ENCODE measurements at regions of chr10 and their contacts with region 1.

Region 1: DNA sequence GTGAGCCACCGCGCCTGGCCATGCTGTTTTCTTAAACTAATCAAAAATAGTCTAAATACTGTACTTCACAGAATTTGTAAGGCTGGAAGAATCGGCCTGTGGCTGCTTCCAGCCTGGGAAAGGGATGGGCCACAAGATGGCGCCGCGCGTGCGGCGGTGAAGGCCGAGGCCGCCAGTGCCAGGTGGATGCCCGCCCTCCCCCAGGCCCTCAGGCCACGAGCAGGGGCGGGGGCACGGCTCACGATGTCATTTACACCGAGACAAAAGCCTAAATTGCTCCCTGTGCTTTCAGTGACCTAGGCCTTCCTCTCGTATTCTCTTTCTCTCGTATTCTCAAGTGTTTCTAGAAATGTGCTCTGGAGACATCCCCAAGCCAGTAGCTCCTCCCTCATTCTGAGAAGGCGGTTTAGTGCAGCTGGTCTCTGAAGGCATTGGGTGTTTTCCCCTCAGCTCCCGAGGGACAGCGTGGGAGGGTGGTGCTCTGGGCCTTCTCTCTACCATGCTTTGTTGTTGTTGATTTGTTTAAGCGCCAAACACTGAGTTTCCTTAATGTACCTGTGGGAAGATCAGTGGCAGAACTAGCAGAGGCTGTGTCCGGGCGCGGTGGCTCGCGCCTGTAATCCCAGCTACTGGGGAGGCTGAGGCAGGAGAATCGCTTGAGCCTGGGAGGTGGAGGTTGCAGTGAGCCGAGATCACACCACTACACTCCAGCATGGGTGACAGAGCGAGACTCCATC is 68.4 kb downstream of the CDC123 start:
- DNase-seq: peak; percentile 84
- H3K4me3 Mint-ChIP-seq: peak overlapping the region; percentile 58
- H3K27ac Mint-ChIP-seq: peak overlapping the region; percentile 79
- H3K4me1 Mint-ChIP-seq: peaks cover 17% of the 10 kb centered on the region
- H3K27me3 Mint-ChIP-seq: no peaks in the 10 kb centered on the region

Region 2: DNA sequence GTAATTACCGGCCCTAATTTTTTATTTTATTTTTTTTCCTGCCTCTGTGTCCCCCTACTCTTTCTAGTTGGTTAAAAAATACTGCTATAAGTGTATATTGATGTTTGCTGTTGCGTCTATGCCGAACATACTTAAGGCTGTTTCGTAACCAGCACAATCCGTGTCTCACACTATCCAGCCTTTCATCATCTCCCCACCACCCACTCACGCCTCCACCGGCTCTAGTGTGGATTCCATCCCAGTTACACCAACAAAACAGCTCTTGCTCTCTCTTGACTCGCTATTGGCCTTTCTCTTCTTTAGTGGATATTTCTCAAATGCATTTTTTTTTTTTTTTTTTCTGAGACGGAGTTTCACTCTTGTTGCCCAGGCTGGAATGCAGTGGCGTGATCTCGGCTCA is 14.9 kb after region 1 on chr10:
- CTCF ChIA-PET with region 1: interaction called, 11 read pairs
- intact Hi-C with region 1: no loop called
- DNase-seq: no peak
- H3K4me3 Mint-ChIP-seq: no peak overlapping the region
- H3K27ac Mint-ChIP-seq: no peak overlapping the region
- H3K4me1 Mint-ChIP-seq: no peaks in the 10 kb centered on the region
- H3K27me3 Mint-ChIP-seq: no peaks in the 10 kb centered on the region

Region 3: DNA sequence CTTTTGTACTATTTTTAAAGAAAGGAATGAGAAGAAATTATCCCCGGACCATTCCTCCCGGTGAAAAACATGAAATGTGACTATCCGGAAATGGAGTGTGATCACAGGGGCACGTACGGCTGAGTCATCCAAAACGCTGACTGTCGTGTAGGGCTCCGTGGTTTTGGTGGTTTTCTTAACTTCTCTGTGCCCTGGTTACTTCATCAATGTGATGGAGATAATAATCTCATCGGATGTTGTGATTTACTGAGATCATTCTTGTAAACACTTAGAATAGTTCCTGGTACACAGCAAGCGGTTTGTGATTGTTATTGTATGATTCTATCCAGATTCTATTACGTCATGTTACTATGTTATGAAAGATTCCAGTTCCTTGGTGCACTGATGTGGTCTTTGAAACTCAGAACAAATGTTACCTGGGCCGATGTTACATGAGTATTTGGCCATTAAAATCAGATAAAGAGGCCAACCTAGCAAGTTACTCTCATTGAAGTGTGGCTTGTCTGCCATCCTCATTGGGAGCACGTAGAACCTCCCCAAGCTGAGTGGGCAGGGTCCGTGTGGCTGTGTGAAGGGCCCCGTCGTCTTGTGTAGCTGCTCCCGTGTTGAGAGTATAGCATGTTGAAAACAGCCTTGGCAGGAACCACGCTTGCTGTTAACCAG is 184.5 kb after region 1 on chr10:
- CTCF ChIA-PET with region 1: no interaction called
- intact Hi-C with region 1: loop called (anchors 1 kb)
- DNase-seq: peak; percentile 86
- H3K4me3 Mint-ChIP-seq: peak overlapping the region; percentile 62
- H3K27ac Mint-ChIP-seq: peak overlapping the region; percentile 52
- H3K4me1 Mint-ChIP-seq: peaks cover 40% of the 10 kb centered on the region
- H3K27me3 Mint-ChIP-seq: no peaks in the 10 kb centered on the region

Region 4: GRCh38 chr10:12656518-12657142 is 392.3 kb after region 1 on chr10:
- CTCF ChIA-PET with region 1: interaction called, 81 read pairs
- intact Hi-C with region 1: loop called (anchors 1 kb)
- DNase-seq: no peak
- H3K4me3 Mint-ChIP-seq: no peak overlapping the region
- H3K27ac Mint-ChIP-seq: no peak overlapping the region
- H3K4me1 Mint-ChIP-seq: peaks cover 2% of the 10 kb centered on the region
- H3K27me3 Mint-ChIP-seq: no peaks in the 10 kb centered on the region

Region 5: DNA sequence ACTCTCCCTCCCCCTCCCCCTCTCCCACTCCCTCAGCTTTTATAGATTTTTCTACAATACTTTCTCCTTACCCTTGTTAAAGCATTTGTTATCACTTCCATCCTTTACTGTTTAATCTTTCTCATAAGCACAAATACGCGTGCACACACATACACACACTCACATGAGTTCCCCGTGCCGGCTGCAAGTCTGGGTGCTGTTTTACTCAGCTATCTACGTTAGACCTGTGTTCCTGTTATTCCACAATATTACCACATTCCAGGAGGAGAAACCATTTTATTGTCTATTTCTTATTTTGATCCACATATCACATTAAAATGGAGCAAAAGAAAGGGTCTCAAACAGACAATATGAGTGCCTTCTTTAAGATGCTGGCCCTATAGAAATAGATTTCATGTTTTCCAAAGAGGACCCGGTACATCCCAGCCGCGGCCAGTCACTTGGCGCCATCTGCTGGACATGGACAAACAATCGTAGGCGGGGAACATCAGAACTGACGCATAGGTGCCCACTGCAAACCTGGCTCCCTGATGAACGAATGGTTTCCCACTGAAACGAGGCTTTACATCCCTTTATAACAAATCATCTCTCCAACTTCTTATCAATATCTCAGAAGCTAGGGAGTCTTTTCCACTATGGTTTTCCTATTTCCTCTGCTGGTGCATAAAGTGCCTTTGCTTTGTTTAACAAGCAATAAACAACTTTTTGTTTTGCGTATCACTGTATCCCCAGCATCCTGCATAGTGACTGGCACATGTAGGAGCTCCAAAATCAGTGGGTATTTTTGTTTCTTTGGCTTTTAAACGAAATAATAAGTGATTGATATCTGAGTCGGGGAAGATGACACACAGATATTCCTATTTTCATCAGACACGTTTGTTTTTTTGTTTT is 810.4 kb after region 1 on chr10:
- CTCF ChIA-PET with region 1: interaction called, 3 read pairs
- intact Hi-C with region 1: loop called (anchors 1 kb)
- DNase-seq: peak; percentile 79
- H3K4me3 Mint-ChIP-seq: no peak overlapping the region
- H3K27ac Mint-ChIP-seq: no peak overlapping the region
- H3K4me1 Mint-ChIP-seq: no peaks in the 10 kb centered on the region
- H3K27me3 Mint-ChIP-seq: peaks cover 20% of the 10 kb centered on the region

Measured in activated naive CD4-positive, alpha-beta T cell treated with anti-CD3 and anti-CD28 coated beads for 36 hours (primary cell).